GM12878 (cell line): ENCODE measurements at regions of chr2 and their contacts with region 1.

Region 1: DNA sequence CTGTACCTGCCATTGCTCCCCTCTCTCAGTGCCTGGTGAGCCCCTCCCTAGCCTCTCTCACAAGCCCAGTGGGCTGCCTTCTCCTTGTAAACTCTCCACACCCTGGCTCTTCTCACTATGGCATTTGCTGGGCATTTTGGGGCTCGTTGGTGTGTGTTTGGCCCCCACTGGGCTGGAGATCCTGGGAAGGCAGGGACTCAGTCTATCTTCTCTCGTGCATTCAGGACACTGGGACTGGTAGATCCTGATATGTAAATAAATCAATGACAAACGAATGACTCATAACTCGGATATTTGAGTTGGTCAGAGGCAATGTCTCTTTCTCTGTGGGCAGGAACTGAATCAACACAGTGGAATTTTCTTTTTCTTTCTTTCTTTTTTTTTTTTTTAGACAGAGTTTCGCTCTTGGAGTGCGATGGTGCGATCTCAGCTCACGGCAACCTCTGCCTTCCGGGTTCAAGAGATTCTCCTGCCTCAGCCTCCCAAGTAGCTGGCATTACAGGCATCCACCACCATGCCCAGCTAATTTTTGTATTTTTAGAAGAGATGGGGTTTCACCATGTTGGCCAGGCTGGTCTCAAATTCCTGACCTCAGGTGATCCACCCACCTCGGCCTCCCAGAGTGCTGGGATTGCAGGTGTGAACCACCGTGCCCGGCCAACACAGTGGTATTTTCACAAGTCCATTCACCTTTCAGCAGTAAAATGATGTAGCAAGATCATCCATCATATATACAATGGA is 144.6 kb upstream of the SPRED2 start:
- DNase-seq: no peak
- ATAC-seq: no peak
- H3K4me3 ChIP-seq: no peak overlapping the region
- H3K27ac ChIP-seq: no peak overlapping the region
- H3K4me1 ChIP-seq: peaks cover 3% of the 10 kb centered on the region; the same call in 1 of the 2 replicates
- H3K27me3 ChIP-seq: no peaks in the 10 kb centered on the region; a peak in 1 of 4 replicates
- CTCF ChIP-seq: no peak
- EP300 ChIP-seq: no peak
- POLR2A ChIP-seq: no peak
- RAD21 ChIP-seq: no peak

Region 2: GRCh38 chr2:64873472-64873924 is 703.5 kb before region 1 on chr2:
- CTCF ChIA-PET with region 1: no interaction called
- POLR2A ChIA-PET with region 1: no interaction called
- RAD21 ChIA-PET with region 1: no interaction called
- SMC1A ChIA-PET with region 1: no interaction called
- in situ Hi-C with region 1: no loop called
- intact Hi-C with region 1: loop called (anchors 1 kb)
- DNase-seq: no peak
- ATAC-seq: peak; percentile 98
- H3K4me3 ChIP-seq: peak overlapping the region; percentile 23; the same call in 1 of the 2 replicates
- H3K27ac ChIP-seq: no peak overlapping the region
- H3K4me1 ChIP-seq: peaks cover 9% of the 10 kb centered on the region
- H3K27me3 ChIP-seq: no peaks in the 10 kb centered on the region
- CTCF ChIP-seq: peak; percentile 94 to 99 (median 98)
- EP300 ChIP-seq: no peak
- POLR2A ChIP-seq: no peak
- RAD21 ChIP-seq: peak; percentile 89